Activated naive CD4-positive, alpha-beta T cell treated with anti-CD3 and anti-CD28 coated beads for 36 hours (primary cell): ENCODE measurements at regions of chr15 and their contacts with region 1.

Region 1: DNA sequence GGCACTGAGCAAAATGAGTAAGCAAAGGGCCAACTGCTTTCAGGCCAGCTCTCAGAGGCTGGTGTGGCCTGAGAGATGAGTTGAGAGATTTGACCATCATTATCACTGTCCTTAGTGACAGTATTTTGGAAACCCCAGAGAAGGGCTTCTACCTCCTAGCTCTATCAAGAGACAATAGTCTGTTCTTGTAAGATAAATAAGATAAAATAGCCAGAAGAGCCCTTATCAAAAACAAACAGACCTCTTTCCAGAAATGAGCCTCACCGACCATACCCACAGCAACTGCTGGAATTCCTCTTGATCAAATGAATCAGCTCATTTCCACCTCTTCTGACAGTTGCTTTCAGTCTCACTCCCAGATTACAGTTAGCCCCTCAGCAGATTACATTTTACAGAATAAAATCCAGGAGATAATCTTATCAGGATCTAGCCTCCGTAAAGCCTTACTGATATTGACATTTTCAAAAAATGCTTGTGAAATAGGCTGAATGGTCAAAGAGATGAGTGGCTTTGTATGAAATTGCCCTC is 4.5 kb downstream of the HDC start:
- DNase-seq: no peak
- H3K4me3 Mint-ChIP-seq: peak overlapping the region; percentile 52
- H3K27ac Mint-ChIP-seq: peak overlapping the region; percentile 98
- H3K4me1 Mint-ChIP-seq: peaks cover 73% of the 10 kb centered on the region
- H3K27me3 Mint-ChIP-seq: no peaks in the 10 kb centered on the region

Region 2: GRCh38 chr15:48877630-48878595 is 1383.1 kb before region 1 on chr15 and contains the start of gene EID1:
- CTCF ChIA-PET with region 1: no interaction called
- intact Hi-C with region 1: loop called (anchors 5 kb)
- DNase-seq: peak; percentile 93
- H3K4me3 Mint-ChIP-seq: peak within 1 kb of the TSS; percentile 92
- H3K27ac Mint-ChIP-seq: peak within 1 kb of the TSS; percentile 94
- H3K4me1 Mint-ChIP-seq: peaks cover 29% of the 10 kb centered on the region
- H3K27me3 Mint-ChIP-seq: peaks cover 6% of the 10 kb centered on the region
- total RNA-seq, gene EID1: 43.2 to 48.4 TPM

Region 3: GRCh38 chr15:49387471-49387870 is 873.6 kb before region 1 on chr15:
- CTCF ChIA-PET with region 1: no interaction called
- intact Hi-C with region 1: no loop called
- DNase-seq: no peak
- H3K4me3 Mint-ChIP-seq: no peak overlapping the region
- H3K27ac Mint-ChIP-seq: no peak overlapping the region
- H3K4me1 Mint-ChIP-seq: no peaks in the 10 kb centered on the region
- H3K27me3 Mint-ChIP-seq: peaks cover 10% of the 10 kb centered on the region

Region 4: GRCh38 chr15:49620658-49621368 is 640.2 kb before region 1 on chr15 and contains the starts of genes DTWD1 and FAM227B:
- CTCF ChIA-PET with region 1: no interaction called
- intact Hi-C with region 1: loop called (anchors 1 kb)
- DNase-seq: peak; percentile 96
- H3K4me3 Mint-ChIP-seq: peak within 1 kb of the TSS; percentile 88
- H3K27ac Mint-ChIP-seq: peak within 1 kb of the TSS; percentile 91
- H3K4me1 Mint-ChIP-seq: peaks cover 33% of the 10 kb centered on the region
- H3K27me3 Mint-ChIP-seq: no peaks in the 10 kb centered on the region
- total RNA-seq, gene DTWD1: 18.5 to 19.4 TPM
- total RNA-seq, gene FAM227B: 2.0 to 2.8 TPM

Region 5: GRCh38 chr15:50247819-50248655 is 13.0 kb before region 1 on chr15:
- CTCF ChIA-PET with region 1: interaction called, 37 read pairs
- intact Hi-C with region 1: loop called (anchors 1 kb)
- DNase-seq: peak; percentile 88
- H3K4me3 Mint-ChIP-seq: peak overlapping the region; percentile 81
- H3K27ac Mint-ChIP-seq: peak overlapping the region; percentile 99
- H3K4me1 Mint-ChIP-seq: peaks cover 42% of the 10 kb centered on the region
- H3K27me3 Mint-ChIP-seq: no peaks in the 10 kb centered on the region

Region 6: DNA sequence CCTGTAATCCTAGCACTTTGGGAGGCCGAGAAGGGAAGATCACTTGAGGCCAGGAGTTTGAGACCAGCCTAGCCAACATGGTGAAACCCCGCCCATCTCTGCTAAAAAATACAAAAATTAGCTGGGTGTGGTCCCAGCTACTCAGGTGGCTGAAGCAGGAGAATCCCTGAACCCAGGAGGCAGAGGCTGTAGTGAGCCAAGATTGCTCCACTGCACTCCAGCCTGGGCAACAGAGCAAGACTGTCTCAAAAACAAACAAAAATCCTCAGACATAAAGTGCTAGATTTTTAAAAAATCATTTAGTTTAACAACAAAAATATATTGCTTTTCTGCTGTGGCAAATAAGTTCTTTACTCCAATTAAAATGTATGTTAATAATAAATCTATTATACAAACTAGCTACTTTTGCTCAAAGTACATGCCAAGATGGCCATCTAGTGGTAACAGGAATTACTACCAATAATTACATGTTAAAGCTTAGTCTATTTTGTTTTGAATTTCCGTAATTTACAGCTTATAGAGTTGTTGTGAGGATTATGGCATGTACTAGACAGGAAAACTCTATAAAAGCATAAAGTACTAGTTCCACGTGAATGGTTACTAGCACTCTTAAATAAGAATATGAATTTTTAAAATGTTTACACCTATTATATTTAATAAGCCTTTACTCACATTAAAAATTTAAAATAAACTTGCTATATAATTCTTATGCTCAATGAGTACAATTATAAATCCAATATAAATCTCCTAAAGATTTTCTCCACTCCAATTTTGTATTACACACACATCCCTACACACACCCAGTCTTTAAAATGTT is 55.0 kb after region 1 on chr15:
- CTCF ChIA-PET with region 1: interaction called, 10 read pairs
- intact Hi-C with region 1: loop called (anchors 1 kb)
- DNase-seq: no peak
- H3K4me3 Mint-ChIP-seq: no peak overlapping the region
- H3K27ac Mint-ChIP-seq: no peak overlapping the region
- H3K4me1 Mint-ChIP-seq: peaks cover 25% of the 10 kb centered on the region
- H3K27me3 Mint-ChIP-seq: no peaks in the 10 kb centered on the region

Region 7: DNA sequence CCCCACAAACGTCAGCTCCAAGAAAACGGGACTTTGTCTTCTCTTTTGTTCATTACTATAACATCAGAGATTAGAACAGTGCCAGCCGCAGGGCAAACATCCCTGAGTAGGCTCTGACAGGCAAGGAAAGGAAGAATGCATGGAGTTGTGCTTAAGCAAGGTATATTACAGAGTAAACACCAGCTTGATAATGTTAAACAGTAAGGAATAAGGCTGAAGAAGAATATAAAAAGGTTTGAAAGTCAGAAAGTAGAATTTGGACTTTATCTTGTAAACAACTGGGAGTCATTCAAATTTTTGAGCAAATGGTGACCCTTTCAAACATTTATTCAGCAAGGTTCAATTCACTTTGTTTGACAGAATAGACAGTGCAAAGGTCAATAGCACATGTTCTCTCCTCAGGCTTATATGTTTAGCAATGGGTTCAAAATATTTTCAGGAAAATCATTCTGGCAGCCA is 83.0 kb after region 1 on chr15:
- CTCF ChIA-PET with region 1: no interaction called
- intact Hi-C with region 1: no loop called
- DNase-seq: no peak
- H3K4me3 Mint-ChIP-seq: no peak overlapping the region
- H3K27ac Mint-ChIP-seq: no peak overlapping the region
- H3K4me1 Mint-ChIP-seq: peaks cover 40% of the 10 kb centered on the region
- H3K27me3 Mint-ChIP-seq: no peaks in the 10 kb centered on the region

Region 8: GRCh38 chr15:50686468-50687301 is 425.7 kb after region 1 on chr15 and contains the start of gene TRPM7:
- CTCF ChIA-PET with region 1: no interaction called
- intact Hi-C with region 1: loop called (anchors 5 kb)
- DNase-seq: peak; percentile 87
- H3K4me3 Mint-ChIP-seq: peak within 1 kb of the TSS; percentile 99
- H3K27ac Mint-ChIP-seq: peak within 1 kb of the TSS; percentile 98
- H3K4me1 Mint-ChIP-seq: peaks cover 52% of the 10 kb centered on the region
- H3K27me3 Mint-ChIP-seq: no peaks in the 10 kb centered on the region
- total RNA-seq, gene TRPM7: 31.1 to 32.7 TPM

Region 9: DNA sequence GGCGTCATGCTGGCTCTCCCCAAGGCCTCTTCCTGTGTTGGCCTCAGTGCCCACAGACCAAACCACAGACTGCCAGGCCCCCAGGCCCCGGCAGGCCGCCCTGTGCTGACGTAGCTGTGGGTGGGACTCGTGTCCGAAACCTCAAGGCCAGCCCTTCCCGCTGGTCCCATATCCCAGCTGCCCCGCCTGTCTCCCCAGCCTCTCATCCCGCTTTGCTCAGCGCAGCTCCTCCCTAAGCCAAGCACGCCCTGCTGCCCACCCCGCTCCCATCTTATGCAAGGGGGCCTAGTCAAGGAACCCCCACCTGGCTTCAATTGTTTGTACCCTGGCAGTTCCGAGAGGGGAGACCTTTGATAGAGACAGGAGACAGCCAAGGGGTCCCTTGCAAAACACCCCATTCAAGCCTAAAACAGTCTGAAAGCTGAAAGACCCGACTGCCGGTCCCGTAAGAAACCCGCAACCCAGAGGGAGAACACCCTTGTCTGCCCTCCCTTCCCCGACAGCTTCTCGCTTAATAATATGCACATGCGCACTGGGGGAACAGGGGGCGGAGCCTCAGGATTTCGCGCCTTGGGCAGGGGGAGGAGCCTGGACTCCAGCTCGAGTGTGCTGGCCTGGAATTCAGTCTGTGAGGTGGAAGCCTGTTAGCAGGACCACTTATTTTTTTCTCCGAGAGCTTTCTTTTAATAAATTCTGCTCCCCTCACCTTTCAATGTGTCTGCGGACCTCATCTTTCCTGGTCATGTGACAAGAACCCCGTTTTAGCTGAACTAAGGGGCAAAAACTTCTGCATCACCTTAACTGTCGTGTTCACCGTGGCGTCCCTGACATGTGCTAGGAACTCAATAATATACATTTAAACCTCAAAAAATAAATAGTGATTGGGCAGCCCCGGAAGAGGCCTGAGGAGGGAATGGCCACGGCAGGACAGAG is 816.5 kb after region 1 on chr15:
- CTCF ChIA-PET with region 1: no interaction called
- intact Hi-C with region 1: loop called (anchors 10 kb)
- DNase-seq: peak; percentile 91
- H3K4me3 Mint-ChIP-seq: peak overlapping the region; percentile 68
- H3K27ac Mint-ChIP-seq: peak overlapping the region; percentile 85
- H3K4me1 Mint-ChIP-seq: peaks cover 24% of the 10 kb centered on the region
- H3K27me3 Mint-ChIP-seq: peaks cover 8% of the 10 kb centered on the region